ENCODE measurements at regions of chr12 and their contacts with region 1.

Region 1: DNA sequence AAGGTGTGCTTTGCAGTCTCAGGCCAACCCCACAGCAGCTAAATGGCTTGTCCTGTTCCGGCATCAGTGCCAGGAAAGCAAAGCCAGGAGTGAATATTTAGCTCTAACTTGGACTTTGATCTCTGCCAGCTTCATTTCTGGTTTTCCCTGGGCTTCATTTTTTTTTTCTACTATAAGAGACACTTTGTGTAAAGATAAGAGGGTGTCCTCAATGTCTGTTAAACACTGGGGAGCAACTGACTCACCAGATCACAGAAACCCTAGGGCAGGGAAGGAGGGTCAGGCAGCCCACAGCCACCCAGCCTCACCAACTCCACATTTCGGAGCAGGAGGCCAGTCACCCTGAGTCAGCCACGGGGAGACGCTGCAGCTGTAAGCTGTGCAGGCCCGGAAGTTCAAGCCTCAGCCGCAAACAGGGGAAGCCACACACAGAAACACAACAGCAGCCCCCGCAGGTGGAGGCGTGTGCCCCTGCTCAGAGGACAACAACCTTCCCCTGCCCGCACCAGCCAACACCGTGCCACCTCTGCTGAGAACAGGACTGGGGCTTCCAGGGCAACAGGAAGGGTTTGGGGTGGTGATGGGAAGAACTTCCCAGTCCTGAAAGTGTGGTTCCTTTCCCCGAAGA is 6.3 kb downstream of the TNFRSF1A start:
- DNase-seq: peak; percentile 81 to 93
- ATAC-seq: peak; percentile 55 to 77 (median 70)
- H3K4me3 ChIP-seq: peak overlapping the region; percentile 94
- H3K4me3 Mint-ChIP-seq: no peak overlapping the region
- H3K27ac ChIP-seq: peak overlapping the region; percentile 79
- H3K27ac Mint-ChIP-seq: no peak overlapping the region
- H3K4me1 ChIP-seq: peaks cover 89% of the 10 kb centered on the region
- H3K4me1 Mint-ChIP-seq: peaks cover 6 to 44% of the 10 kb centered on the region in 2 donors
- H3K27me3 ChIP-seq: no peaks in the 10 kb centered on the region
- H3K27me3 Mint-ChIP-seq: no peaks in the 10 kb centered on the region
- CTCF ChIP-seq: peak; percentile 46

Region 2: DNA sequence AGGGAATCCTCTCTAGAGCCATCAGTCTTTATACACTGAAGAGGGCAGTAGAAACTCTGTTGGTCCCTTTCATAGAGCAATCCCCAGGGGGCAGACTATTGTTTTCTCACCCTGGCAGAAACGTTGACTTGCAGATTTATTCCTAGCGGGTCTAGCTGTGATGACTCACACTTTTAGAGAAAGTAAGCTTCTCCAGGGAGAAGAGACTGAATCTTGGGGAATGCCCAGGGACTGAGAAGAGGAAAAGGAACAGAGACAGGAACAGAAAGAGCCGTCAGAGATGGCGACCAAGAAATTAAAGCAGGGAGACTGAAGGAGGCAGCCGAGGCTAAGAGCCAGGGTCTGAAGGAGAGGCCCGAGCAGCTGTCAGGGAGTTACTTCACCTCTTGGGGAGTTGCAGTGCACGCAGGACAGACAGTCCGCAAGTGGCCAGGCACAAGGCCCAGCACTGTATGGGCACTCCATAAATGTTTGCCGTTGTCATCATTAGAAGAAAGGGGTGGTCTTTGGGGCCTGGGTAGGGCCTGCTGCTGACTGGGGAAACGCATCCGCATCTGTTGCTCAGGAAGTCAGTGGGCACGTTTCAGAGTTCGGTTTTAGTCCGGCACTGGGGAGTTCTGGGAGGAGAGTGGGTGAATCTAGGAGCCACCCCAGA is 12.1 kb before region 1 on chr12:
- intact Hi-C with region 1: loop called (anchors 1 kb)
- DNase-seq: peak in 1 of 2 donors; percentile 78
- ATAC-seq: peak; percentile 87 to 91 (median 87)
- H3K4me3 ChIP-seq: no peak overlapping the region
- H3K4me3 Mint-ChIP-seq: peak overlapping the region; percentile 91
- H3K27ac ChIP-seq: peak overlapping the region; percentile 11
- H3K27ac Mint-ChIP-seq: peak overlapping the region; percentile 87 to 90
- H3K4me1 ChIP-seq: peaks cover 53% of the 10 kb centered on the region
- H3K4me1 Mint-ChIP-seq: peaks cover 55 to 69% of the 10 kb centered on the region in 2 donors
- H3K27me3 ChIP-seq: no peaks in the 10 kb centered on the region
- H3K27me3 Mint-ChIP-seq: no peaks in the 10 kb centered on the region
- CTCF ChIP-seq: peak; percentile 74

Region 3: GRCh38 chr12:6367065-6367968 is 31.8 kb after region 1 on chr12:
- intact Hi-C with region 1: loop called (anchors 1 kb)
- DNase-seq: peak in 1 of 2 donors; percentile 78
- ATAC-seq: peak; percentile 60 to 76 (median 68)
- H3K4me3 ChIP-seq: no peak overlapping the region
- H3K4me3 Mint-ChIP-seq: peak overlapping the region; percentile 70
- H3K27ac ChIP-seq: peak overlapping the region; percentile 60
- H3K27ac Mint-ChIP-seq: peak overlapping the region; percentile 81 to 84
- H3K4me1 ChIP-seq: peaks cover 41% of the 10 kb centered on the region
- H3K4me1 Mint-ChIP-seq: peaks cover 27 to 40% of the 10 kb centered on the region in 2 donors
- H3K27me3 ChIP-seq: no peaks in the 10 kb centered on the region
- H3K27me3 Mint-ChIP-seq: no peaks in the 10 kb centered on the region
- CTCF ChIP-seq: peak; percentile 41

Region 4: GRCh38 chr12:6423267-6424007 is 87.9 kb after region 1 on chr12:
- intact Hi-C with region 1: loop called (anchors 2 kb)
- DNase-seq: peak; percentile 61 to 95
- ATAC-seq: peak; percentile 91 to 96 (median 93)
- H3K4me3 ChIP-seq: no peak overlapping the region
- H3K4me3 Mint-ChIP-seq: no peak overlapping the region
- H3K27ac ChIP-seq: no peak overlapping the region
- H3K27ac Mint-ChIP-seq: peak overlapping the region in 1 of 2 donors; percentile 68
- H3K4me1 ChIP-seq: peaks cover 32% of the 10 kb centered on the region
- H3K4me1 Mint-ChIP-seq: peaks cover 0 to 26% of the 10 kb centered on the region in 2 donors
- H3K27me3 ChIP-seq: no peaks in the 10 kb centered on the region
- H3K27me3 Mint-ChIP-seq: no peaks in the 10 kb centered on the region
- CTCF ChIP-seq: peak; percentile 79

Region 5: GRCh38 chr12:6461401-6462233 is 126.1 kb after region 1 on chr12:
- intact Hi-C with region 1: loop called (anchors 2 kb)
- DNase-seq: peak; percentile 68 to 95
- ATAC-seq: peak; percentile 79 to 94 (median 92)
- H3K4me3 ChIP-seq: no peak overlapping the region
- H3K4me3 Mint-ChIP-seq: peak overlapping the region; percentile 75
- H3K27ac ChIP-seq: peak overlapping the region; percentile 88
- H3K27ac Mint-ChIP-seq: peak overlapping the region; percentile 95 to 97
- H3K4me1 ChIP-seq: peaks cover 57% of the 10 kb centered on the region
- H3K4me1 Mint-ChIP-seq: peaks cover 50 to 77% of the 10 kb centered on the region in 2 donors
- H3K27me3 ChIP-seq: no peaks in the 10 kb centered on the region
- H3K27me3 Mint-ChIP-seq: no peaks in the 10 kb centered on the region
- CTCF ChIP-seq: no peak

Region 6: DNA sequence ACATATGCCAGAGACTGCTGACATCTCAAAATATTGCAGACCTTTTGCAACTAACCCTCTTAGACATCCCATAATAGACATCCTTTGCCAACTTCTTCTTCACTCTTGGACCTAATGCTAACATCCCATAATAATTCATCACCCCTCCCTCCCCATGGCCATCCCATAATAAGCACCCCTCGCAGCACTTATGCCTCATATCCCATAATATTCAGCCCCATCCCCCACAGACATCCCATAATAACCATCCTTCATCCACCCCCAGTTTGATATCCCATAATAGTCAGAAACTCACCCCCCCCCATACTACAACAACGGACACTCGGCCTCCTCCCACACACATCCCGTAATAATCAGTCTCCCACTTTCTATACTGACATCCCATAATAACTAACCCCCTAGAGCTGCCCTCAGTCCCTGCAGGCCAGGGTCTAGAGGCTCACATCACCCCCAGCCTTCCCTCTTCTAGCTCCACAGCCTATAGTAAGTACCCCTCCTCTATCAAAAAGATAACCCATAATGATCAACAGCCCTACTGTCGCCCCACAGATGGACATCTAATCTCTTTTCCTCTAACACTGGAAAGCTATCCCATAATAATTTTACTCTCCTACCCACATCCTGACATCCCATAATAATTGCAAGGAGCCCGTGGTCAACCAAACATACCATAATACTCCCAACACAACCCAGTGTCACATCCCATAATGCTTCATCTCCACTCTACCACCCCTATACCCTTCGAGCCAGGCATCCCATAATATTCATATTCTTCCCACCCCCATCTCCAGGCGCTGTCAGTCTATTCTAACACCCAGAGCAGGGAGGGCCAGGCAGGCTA is 272.4 kb after region 1 on chr12:
- intact Hi-C with region 1: loop called (anchors 5 kb)
- DNase-seq: peak; percentile 49 to 87
- ATAC-seq: peak; percentile 43 to 69 (median 53)
- H3K4me3 ChIP-seq: no peak overlapping the region
- H3K4me3 Mint-ChIP-seq: no peak overlapping the region
- H3K27ac ChIP-seq: peak overlapping the region; percentile 97
- H3K27ac Mint-ChIP-seq: no peak overlapping the region
- H3K4me1 ChIP-seq: peaks cover 59% of the 10 kb centered on the region
- H3K4me1 Mint-ChIP-seq: peaks cover 40 to 53% of the 10 kb centered on the region in 2 donors
- H3K27me3 ChIP-seq: no peaks in the 10 kb centered on the region
- H3K27me3 Mint-ChIP-seq: no peaks in the 10 kb centered on the region
- CTCF ChIP-seq: no peak